Activated CD4-positive, alpha-beta memory T cell treated with anti-CD3 and anti-CD28 coated beads for 36 hours (primary cell): ENCODE measurements at regions of chr2 and their contacts with region 1.

Region 1: DNA sequence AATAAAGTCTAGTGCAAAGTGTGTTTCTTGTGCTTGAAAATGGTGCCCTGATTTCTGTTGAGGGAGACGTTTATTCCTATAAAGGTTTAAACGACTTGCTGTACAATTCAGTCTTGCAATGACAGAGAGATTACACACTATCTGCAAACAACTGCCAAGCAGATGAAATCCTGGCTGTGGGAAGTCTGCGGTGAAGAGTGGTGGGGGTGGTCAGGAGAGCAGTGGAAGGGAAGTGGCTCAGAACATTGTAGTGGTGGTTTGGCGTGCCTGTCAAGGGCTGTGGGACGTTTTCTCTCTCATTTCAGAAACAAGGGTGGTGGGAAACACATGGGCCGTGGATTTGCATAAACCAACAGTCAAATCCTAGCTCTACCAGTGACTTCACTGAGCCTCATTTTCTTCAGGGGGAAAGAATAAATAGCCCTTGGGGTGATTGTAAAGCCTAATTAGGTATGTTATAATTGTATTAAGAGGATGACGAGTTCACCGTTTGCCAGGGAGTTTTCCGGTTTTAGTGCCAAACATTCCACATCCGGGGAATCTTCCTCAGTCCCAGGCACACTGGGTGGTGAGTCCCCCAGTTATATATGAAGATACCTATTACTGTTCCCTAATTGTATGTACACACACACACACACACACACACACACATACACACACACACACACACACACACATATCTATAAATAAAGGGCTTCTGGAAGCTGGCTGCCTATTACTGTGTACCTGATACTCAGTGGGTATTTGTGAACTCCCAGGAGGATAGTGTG is 115.0 kb downstream of the SPTBN1 start:
- DNase-seq: peak; percentile 93
- H3K4me3 Mint-ChIP-seq: peak overlapping the region; percentile 36
- H3K27ac Mint-ChIP-seq: peak overlapping the region; percentile 96
- H3K4me1 Mint-ChIP-seq: peaks cover 85% of the 10 kb centered on the region
- H3K27me3 Mint-ChIP-seq: no peaks in the 10 kb centered on the region

Region 2: GRCh38 chr2:54558188-54559005 is 12.7 kb before region 1 on chr2:
- CTCF ChIA-PET with region 1: interaction called, 37 read pairs
- POLR2A ChIA-PET with region 1: interaction called, 113 read pairs
- intact Hi-C with region 1: loop called (anchors 1 kb)
- DNase-seq: peak; percentile 85
- H3K4me3 Mint-ChIP-seq: peak overlapping the region; percentile 83
- H3K27ac Mint-ChIP-seq: peak overlapping the region; percentile 89
- H3K4me1 Mint-ChIP-seq: peaks cover 42% of the 10 kb centered on the region
- H3K27me3 Mint-ChIP-seq: no peaks in the 10 kb centered on the region

Region 3: GRCh38 chr2:54606393-54606969 is 35.4 kb after region 1 on chr2:
- CTCF ChIA-PET with region 1: interaction called, 3 read pairs
- POLR2A ChIA-PET with region 1: interaction called, 3 read pairs
- intact Hi-C with region 1: loop called (anchors 1 kb)
- DNase-seq: peak; percentile 48
- H3K4me3 Mint-ChIP-seq: no peak overlapping the region
- H3K27ac Mint-ChIP-seq: peak overlapping the region; percentile 30
- H3K4me1 Mint-ChIP-seq: peaks cover 74% of the 10 kb centered on the region
- H3K27me3 Mint-ChIP-seq: no peaks in the 10 kb centered on the region

Region 4: DNA sequence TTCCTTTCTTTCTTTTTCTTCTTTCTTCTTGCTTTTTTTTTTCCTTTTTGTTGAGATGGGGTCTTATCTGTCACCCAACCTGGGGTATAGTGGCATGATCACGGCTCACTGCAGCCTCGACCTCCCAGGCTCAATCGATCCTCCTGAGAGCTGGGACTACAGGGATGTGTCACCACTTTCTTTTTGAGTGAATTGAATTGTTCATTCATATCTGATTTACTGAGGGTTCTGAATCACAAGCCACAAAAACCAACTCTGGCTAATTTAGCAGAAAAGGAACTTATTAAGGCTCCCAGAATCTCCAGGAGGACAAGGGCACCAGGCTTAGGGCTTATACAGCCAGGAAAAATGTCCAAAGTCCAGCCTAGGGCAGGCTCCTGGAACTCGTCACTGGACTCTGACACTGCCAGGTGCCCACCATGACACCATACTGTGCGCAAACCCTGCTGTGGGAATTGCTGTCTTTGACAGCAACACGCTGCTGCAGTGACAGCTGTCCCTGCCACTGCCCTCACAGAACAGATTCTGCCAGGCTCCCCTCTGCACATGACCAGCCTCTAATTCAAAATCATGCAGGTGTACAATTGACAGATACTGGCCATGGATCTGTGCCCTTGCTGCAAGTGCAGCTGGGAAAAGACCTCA is 109.4 kb after region 1 on chr2:
- CTCF ChIA-PET with region 1: no interaction called
- POLR2A ChIA-PET with region 1: interaction called, 5 read pairs
- intact Hi-C with region 1: loop called (anchors 1 kb)
- DNase-seq: peak; percentile 65
- H3K4me3 Mint-ChIP-seq: peak overlapping the region; percentile 47
- H3K27ac Mint-ChIP-seq: no peak overlapping the region
- H3K4me1 Mint-ChIP-seq: peaks cover 21% of the 10 kb centered on the region
- H3K27me3 Mint-ChIP-seq: peaks cover 68% of the 10 kb centered on the region

Region 5: GRCh38 chr2:55232084-55232862 is 661.2 kb after region 1 on chr2 and contains the starts of genes CLHC1 and RPS27A:
- CTCF ChIA-PET with region 1: no interaction called
- POLR2A ChIA-PET with region 1: no interaction called
- intact Hi-C with region 1: loop called (anchors 5 kb)
- DNase-seq: peak; percentile 95
- H3K4me3 Mint-ChIP-seq: peak within 1 kb of the TSS; percentile 96
- H3K27ac Mint-ChIP-seq: peak within 1 kb of the TSS; percentile 94
- H3K4me1 Mint-ChIP-seq: peaks cover 60% of the 10 kb centered on the region
- H3K27me3 Mint-ChIP-seq: no peaks in the 10 kb centered on the region
- total RNA-seq, gene CLHC1: 5.5 to 7.5 TPM
- total RNA-seq, gene RPS27A: 1,372 to 1,402 TPM